K562 (cell line): ENCODE measurements at regions of chr6 and their contacts with region 1.

Region 1: DNA sequence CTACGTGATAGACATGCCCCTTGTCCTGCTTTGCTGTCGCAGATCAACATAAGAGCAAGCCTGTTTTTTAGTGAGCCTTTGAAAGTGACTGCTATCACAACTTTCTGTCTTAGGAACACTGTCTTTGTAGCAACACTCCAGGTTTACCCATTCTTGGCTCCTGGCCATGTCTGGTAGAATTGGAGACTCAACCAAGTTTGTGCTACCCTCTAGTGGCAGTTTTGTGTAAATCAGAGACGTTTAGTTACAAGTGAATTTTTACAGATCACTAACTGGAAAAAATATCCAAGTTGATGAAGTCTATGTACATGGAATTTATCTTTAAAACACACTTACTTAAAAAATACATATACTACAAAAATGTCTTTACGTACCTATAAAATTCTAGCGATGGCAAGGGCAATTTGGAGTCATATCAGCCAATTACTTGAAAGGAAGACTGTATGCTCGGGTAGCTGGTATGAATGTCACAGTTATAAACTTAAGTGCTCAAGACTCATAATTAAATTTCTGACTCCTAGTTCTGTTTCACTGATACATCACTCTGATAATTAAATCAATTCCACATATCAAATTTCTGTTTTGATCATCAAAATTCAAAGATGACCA is 101.4 kb downstream of the ADGB start:
- DNase-seq: peak; percentile 70 to 90 (median 76)
- ATAC-seq: peak; percentile 91
- H3K4me3 ChIP-seq: no peak overlapping the region
- H3K27ac ChIP-seq: no peak overlapping the region
- H3K4me1 ChIP-seq: no peaks in the 10 kb centered on the region
- H3K27me3 ChIP-seq: no peaks in the 10 kb centered on the region
- CTCF ChIP-seq: peak; percentile 69 to 92 (median 82)
- EP300 ChIP-seq: no peak
- POLR2A ChIP-seq: no peak
- RAD21 ChIP-seq: peak; percentile 98

Region 2: GRCh38 chr6:145929037-145929633 is 771.0 kb before region 1 on chr6:
- CTCF ChIA-PET with region 1: interaction called, 6 read pairs
- POLR2A ChIA-PET with region 1: no interaction called
- in situ Hi-C with region 1: no loop called
- intact Hi-C with region 1: loop called (anchors 5 kb)
- DNase-seq: peak; percentile 24 to 64 (median 30)
- ATAC-seq: peak; percentile 66
- H3K4me3 ChIP-seq: no peak overlapping the region
- H3K27ac ChIP-seq: no peak overlapping the region
- H3K4me1 ChIP-seq: no peaks in the 10 kb centered on the region
- H3K27me3 ChIP-seq: no peaks in the 10 kb centered on the region
- CTCF ChIP-seq: peak; percentile 43 to 77 (median 60); a peak in 4 of 6 replicates
- EP300 ChIP-seq: 0 out of 2 replicates have a peak, but pooled peaks have one; percentile 5
- POLR2A ChIP-seq: no peak
- RAD21 ChIP-seq: peak; percentile 70 to 72

Region 3: DNA sequence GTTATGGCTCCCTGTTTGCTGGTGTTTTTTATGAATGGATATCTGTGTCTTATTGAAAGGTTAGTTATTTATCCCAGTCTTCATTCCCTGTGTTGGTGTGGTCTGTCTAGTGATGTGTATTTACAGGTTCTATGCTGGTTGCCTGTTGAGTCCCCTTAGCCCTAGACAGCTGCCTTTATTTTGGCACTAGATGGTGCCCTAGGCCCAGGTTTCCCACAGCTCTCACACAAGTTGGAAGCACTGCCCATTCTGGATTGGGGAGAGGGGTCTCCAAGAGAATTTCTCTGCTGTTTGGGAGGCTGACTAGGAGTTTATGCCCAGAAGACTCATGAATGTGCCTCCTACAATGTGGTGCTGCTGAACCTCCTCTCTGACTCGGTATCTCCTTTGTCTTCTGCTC is 658.9 kb before region 1 on chr6:
- CTCF ChIA-PET with region 1: no interaction called
- POLR2A ChIA-PET with region 1: no interaction called
- in situ Hi-C with region 1: no loop called
- intact Hi-C with region 1: loop called (anchors 2 kb)
- DNase-seq: peak in 1 of 4 experiments; percentile 34
- ATAC-seq: peak; percentile 76
- H3K4me3 ChIP-seq: no peak overlapping the region
- H3K27ac ChIP-seq: no peak overlapping the region
- H3K4me1 ChIP-seq: no peaks in the 10 kb centered on the region
- H3K27me3 ChIP-seq: no peaks in the 10 kb centered on the region
- CTCF ChIP-seq: peak; percentile 34 to 53 (median 44); a peak in 5 of 6 replicates
- EP300 ChIP-seq: no peak
- POLR2A ChIP-seq: no peak
- RAD21 ChIP-seq: peak; percentile 69 to 73

Region 4: DNA sequence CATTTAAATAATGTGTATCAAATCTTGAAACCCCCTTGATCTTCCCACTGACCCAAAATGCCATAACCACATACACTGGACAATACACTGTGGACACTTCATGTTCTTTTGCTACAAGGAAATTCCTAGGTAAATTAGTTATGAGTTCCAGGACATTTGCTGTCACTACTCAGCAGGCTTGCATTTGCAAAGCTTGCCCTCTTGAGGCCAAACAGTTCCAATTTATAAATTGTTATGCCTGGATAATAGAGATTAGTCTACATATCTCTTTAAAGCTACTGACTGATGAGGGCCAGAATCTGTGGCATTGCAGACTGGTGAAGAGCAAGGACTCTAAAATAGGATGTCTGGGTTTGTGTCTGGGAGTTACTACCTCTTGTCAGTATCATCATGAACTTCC is 174.0 kb before region 1 on chr6:
- CTCF ChIA-PET with region 1: no interaction called
- POLR2A ChIA-PET with region 1: no interaction called
- in situ Hi-C with region 1: no loop called
- intact Hi-C with region 1: no loop called
- DNase-seq: no peak
- ATAC-seq: no peak
- H3K4me3 ChIP-seq: no peak overlapping the region
- H3K27ac ChIP-seq: no peak overlapping the region
- H3K4me1 ChIP-seq: no peaks in the 10 kb centered on the region
- H3K27me3 ChIP-seq: no peaks in the 10 kb centered on the region
- CTCF ChIP-seq: peak in 1 of 3 experiments; percentile 26; a peak in 1 of 6 replicates
- EP300 ChIP-seq: no peak
- POLR2A ChIP-seq: no peak
- RAD21 ChIP-seq: peak in 1 of 2 experiments; percentile 40; a peak in 2 of 4 replicates

Region 5: DNA sequence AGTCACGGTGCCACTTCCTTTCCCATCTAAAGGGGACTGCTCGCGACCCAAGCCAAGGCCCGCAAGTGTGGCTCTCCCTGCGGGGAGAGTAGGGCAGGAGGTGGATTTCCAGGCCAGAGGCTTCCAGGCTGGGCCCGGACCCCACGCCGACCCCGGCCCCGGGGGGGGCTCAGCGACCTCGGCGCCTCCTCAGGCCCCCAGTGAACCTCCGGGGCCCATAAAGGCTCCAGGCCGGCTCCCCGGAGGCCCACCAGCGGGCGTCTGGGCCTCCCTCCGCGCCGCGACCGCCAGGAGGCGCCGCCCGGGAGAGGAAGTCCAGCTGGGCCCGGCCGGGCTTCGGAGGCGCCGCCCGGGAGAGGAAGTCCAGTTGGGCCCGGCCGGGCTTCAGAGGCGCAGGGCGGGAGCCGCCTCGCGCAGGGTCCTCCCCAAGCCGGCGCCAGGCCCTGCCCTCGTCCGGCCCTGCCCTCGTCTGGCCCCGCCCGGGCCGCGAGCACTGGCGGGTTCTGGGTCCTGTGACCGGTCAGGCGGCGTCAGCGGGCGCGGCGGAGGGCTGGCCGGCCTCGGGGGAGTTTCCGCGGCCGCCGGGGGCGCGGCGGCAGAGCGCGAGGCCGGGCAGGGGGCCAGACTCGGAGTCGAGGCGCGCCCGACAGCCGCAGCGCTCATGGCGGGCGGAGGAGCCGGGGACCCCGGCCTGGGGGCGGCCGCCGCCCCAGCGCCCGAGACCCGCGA is 156.8 kb before region 1 on chr6 and contains the start of gene RAB32:
- CTCF ChIA-PET with region 1: interaction called, 3 read pairs
- POLR2A ChIA-PET with region 1: no interaction called
- in situ Hi-C with region 1: no loop called
- intact Hi-C with region 1: loop called (anchors 1 kb)
- DNase-seq: peak; percentile 88 to 90 (median 88)
- ATAC-seq: peak; percentile 99
- H3K4me3 ChIP-seq: peak within 1 kb of the TSS; percentile 47
- H3K27ac ChIP-seq: peak within 1 kb of the TSS; percentile 58; the same call in 1 of the 3 replicates
- H3K4me1 ChIP-seq: peaks cover 2 to 16% of the 10 kb centered on the region in 2 experiments
- H3K27me3 ChIP-seq: no peaks in the 10 kb centered on the region
- CTCF ChIP-seq: peak; percentile 71 to 95 (median 86)
- EP300 ChIP-seq: no peak
- POLR2A ChIP-seq: peak; percentile 53
- RAD21 ChIP-seq: peak; percentile 87
- polyA plus RNA-seq, gene RAB32: 2.5 to 3.8 TPM

Region 6: GRCh38 chr6:147087641-147088040 is 387.5 kb after region 1 on chr6:
- CTCF ChIA-PET with region 1: no interaction called
- POLR2A ChIA-PET with region 1: no interaction called
- in situ Hi-C with region 1: no loop called
- intact Hi-C with region 1: no loop called
- DNase-seq: no peak
- ATAC-seq: no peak
- H3K4me3 ChIP-seq: no peak overlapping the region
- H3K27ac ChIP-seq: no peak overlapping the region
- H3K4me1 ChIP-seq: no peaks in the 10 kb centered on the region
- H3K27me3 ChIP-seq: no peaks in the 10 kb centered on the region
- CTCF ChIP-seq: no peak
- EP300 ChIP-seq: no peak
- POLR2A ChIP-seq: no peak
- RAD21 ChIP-seq: no peak